GM10248 (cell line): ENCODE measurements at regions of chr9 and their contacts with region 1.

Region 1: GRCh38 chr9:137070201-137070905 is at the start of gene SAPCD2:
- DNase-seq: peak; percentile 94
- CTCF ChIP-seq: no peak

Region 2: DNA sequence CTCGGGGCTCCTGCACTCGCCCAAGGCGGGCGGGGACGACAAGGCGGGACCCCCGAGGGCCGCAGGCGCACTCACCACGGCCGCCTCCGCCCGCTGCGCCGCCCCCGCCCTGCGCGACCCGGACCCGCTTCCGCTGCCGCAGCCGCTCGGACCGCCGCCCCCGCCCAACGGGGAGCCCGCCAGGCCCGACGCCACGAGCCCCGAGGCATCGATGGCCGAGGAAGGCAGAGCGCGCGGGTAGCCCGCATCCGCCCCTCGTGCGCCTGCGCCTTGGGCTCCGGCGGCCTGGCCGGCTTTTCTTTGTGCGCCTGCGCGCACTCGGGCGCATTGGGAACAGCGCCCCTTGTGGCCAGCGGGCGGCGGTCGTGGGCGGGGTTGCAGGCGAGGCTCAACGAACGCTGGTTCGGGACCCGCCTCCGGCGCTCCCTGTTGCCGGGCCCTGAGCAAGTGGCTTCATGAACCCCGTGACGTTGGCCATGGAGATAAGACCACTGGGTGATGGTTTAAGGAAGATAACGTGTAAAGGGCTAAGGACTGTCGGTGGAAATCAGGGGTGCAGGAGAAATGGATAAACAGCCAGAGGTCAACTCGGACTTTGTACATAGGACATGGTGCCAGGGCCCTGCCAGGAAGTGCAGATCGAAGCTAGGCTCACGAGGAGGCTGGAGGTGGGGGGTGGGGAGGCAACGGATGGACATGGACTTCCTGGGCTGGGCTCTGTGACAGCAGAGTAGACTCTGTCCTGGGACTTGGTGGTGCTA is 125.7 kb before region 1 on chr9 and contains the starts of genes C8G and FBXW5:
- CTCF ChIA-PET with region 1: interaction called, 48 read pairs
- POLR2A ChIA-PET with region 1: no interaction called
- DNase-seq: peak; percentile 100
- CTCF ChIP-seq: peak; percentile 95

Region 3: GRCh38 chr9:137046098-137046787 is 24.1 kb before region 1 on chr9 and contains the start of gene NPDC1:
- CTCF ChIA-PET with region 1: interaction called, 115 read pairs
- POLR2A ChIA-PET with region 1: interaction called, 5 read pairs
- DNase-seq: peak; percentile 93
- CTCF ChIP-seq: peak; percentile 94

Region 4: DNA sequence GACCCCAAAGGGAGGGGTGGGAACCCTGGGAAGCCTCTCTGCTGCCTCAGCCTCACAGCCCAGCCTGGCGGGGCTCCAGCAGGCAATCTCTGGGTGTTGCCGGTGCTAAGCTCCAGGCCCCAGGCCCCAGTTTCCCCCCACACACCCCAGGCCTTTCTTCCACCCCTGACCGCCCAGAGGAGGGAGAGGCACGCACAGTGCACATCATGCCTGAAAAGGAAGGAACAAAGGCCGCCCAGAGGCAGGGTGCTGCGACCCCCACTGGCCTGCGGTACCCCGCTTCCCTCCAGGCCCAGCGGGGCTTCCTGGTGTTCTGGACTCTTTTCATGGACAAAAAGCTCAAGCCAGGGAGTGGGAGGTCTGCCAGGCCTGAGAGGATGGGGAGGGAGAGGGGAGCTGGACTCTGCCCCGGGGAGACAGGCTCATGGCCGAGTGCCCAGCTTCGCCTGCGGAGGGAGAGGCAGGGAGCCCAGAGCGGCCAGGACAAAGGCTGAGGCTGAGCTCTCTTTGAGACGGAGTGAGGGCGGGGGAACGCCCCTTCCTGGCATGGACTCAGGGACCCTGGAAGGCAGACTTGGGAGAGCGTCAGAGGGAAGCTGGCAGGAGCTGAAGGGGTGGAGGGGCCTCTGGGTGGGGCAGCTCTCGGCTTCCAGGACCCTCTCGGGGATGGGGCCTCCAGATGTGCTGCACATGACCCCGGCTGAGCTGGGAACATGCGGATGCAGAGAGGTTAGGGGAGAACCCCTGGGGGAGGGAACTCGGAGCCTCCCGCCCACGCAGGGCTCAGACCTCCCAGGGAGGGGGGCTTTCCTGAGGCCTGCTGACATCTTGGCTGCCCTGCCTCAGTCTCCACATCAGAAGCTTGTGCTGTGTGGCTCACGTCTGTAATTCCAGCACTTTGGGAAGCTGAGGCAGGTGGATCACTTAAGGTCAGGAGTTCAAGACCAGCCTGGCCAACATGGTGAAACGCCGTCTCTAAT is 14.7 kb before region 1 on chr9:
- CTCF ChIA-PET with region 1: interaction called, 115 read pairs
- POLR2A ChIA-PET with region 1: no interaction called
- DNase-seq: no peak
- CTCF ChIP-seq: no peak

Region 5: DNA sequence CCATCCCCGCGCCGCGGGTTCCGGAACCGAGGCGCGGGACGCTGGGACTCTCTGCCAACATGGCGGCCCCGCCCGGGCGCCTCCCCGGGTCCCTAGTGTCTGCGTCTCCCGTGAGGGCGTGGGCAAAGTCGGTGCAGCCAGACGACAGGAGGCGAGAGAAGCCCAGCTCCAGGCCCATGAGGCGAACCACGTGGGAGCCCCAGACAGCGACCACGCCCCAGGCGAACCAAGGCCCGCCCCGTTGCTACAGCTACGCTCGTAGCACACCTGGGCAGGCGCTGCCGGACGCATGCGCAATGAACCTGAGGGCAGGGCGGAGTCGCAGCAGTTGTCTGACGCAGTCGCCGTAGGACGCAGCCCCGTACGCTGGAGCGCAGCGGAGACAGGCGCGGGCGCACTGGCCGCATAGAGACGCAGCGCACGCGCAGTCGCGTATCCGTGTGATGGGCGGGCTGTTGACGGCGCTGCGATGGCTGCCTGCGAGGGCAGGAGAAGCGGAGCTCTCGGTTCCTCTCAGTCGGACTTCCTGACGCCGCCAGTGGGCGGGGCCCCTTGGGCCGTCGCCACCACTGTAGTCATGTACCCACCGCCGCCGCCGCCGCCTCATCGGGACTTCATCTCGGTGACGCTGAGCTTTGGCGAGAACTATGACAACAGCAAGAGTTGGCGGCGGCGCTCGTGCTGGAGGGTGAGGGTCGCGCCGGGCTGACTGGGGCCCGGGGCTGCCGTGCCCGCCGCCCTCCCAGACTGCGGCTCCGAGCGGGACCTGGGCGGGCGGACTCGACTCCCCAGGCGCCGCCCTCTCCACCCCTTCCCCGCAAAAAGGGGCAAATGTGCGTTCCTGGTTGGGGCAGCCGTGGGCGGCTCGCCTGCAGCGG is 16.4 kb after region 1 on chr9 and contains the start of gene MAN1B1:
- CTCF ChIA-PET with region 1: interaction called, 21 read pairs
- POLR2A ChIA-PET with region 1: interaction called, 6 read pairs
- DNase-seq: peak; percentile 98
- CTCF ChIP-seq: no peak

Region 6: GRCh38 chr9:137095664-137096517 is 25.5 kb after region 1 on chr9:
- CTCF ChIA-PET with region 1: interaction called, 16 read pairs
- POLR2A ChIA-PET with region 1: no interaction called
- DNase-seq: peak; percentile 87
- CTCF ChIP-seq: peak; percentile 71

Region 7: GRCh38 chr9:137105814-137106661 is 35.7 kb after region 1 on chr9:
- CTCF ChIA-PET with region 1: no interaction called
- POLR2A ChIA-PET with region 1: no interaction called
- DNase-seq: no peak
- CTCF ChIP-seq: no peak

Region 8: DNA sequence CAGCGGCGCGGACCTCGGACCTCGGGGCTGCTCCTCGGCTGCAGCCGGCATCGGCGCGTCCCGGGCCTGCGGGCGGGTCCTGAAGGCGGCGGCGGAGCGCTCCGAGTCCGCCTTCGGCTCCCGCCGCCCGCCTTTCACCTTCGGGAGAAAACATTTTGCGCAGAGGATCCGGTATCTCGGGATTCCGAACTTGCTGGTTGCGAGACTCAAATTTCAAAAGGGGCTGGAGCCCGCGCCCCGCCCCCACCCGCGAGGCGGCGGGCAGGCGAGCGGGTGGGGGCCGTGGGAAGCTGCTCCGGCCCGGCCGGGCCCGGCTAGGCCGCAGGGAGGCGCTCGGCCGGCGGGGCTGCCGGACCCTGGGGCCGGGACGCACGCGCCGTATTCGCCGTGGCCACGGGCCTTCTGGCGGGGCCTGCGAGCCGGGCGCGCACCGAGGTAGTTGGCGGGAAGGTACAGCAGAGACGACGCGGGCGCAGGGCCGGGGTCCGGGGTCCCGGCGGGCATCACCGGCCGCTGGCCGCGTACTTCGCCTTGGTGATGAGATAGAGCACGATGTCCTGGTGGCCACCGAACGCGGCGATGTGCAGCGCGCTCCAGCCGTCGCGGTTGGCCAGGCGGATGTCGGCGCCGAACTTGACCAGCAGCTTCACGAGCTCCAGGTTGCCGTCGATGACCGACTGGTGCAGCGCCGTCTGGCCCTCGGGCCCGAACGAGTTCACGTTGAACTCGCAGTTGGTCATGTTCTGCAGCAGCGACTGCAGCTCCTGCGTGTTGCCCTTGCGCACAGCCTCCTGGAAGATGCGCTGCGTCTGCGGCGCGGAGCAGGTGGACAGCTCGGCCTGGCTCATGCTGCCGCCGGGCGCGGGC is 231.0 kb after region 1 on chr9:
- CTCF ChIA-PET with region 1: no interaction called
- POLR2A ChIA-PET with region 1: no interaction called
- DNase-seq: no peak
- CTCF ChIP-seq: peak; percentile 47